ENCODE measurements at regions of chr5 and their contacts with region 1.

Region 1: GRCh38 chr5:93596676-93597461 is 13.8 kb downstream of the NR2F1 start:
- DNase-seq: peak in 1 of 6 donors; percentile 60
- ATAC-seq: peak in 3 of 4 donors; percentile 43 to 64 (median 59)
- H3K4me3 ChIP-seq: peak overlapping the region in 1 of 4 donors; percentile 23
- H3K27ac ChIP-seq: no peak overlapping the region
- H3K4me1 ChIP-seq: no peaks in the 10 kb centered on the region
- H3K27me3 ChIP-seq: peaks cover 0 to 10% (median 5%) of the 10 kb centered on the region in 4 donors
- CTCF ChIP-seq: no peak

Region 2: DNA sequence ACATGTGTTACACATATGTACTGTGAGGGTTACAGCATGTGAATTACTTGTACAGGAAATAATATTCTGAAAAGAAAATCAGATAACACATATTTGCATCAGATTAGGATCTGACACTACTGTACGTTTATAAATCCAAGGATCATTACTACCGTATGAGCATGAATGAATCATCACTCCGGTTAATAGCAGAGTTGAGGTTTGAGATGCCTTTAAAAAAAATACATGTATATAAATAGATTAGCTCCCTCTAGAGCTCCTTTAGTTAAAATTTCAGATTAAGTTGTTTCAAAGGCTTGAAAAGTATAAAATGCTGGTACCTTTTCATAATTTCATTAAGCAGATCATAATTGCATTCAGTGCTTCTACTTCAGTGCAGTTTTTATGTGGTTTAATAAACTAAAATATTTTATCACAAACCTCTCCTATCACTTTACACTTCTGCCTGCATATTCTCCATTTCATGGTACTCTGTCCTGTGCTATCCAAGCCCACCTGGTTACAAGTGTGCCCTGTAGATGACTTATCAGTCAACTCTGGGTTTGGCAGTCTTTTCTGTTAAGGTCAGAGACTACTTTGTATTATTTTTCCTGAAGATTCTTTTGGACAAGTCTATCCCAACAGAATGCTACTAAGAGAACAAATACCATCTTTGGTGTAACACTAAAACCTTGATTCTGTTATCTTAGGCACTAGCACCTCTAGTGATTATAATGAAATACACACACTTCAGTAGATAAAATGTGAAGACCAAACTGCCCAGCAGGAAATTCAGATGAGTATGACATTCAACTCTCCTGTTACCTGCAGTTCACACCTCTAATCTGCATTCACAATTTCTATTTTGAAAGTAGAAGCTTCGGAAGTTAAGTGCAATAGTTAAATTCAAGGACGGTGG is 192.6 kb after region 1 on chr5:
- intact Hi-C with region 1: loop called in 2 of 3 experiments (anchors 10 kb)
- DNase-seq: no peak
- ATAC-seq: no peak
- H3K4me3 ChIP-seq: no peak overlapping the region
- H3K27ac ChIP-seq: no peak overlapping the region
- H3K4me1 ChIP-seq: no peaks in the 10 kb centered on the region
- H3K27me3 ChIP-seq: no peaks in the 10 kb centered on the region
- CTCF ChIP-seq: no peak